Dendritic cell treated with granulocyte-macrophage colony-stimulating factor and Interleukin-4, amounts not matched to agents 40 ng/mL and 50 ng/mL, for 4 days (primary cell): ENCODE measurements at regions of chr9 and their contacts with region 1.

Region 1: DNA sequence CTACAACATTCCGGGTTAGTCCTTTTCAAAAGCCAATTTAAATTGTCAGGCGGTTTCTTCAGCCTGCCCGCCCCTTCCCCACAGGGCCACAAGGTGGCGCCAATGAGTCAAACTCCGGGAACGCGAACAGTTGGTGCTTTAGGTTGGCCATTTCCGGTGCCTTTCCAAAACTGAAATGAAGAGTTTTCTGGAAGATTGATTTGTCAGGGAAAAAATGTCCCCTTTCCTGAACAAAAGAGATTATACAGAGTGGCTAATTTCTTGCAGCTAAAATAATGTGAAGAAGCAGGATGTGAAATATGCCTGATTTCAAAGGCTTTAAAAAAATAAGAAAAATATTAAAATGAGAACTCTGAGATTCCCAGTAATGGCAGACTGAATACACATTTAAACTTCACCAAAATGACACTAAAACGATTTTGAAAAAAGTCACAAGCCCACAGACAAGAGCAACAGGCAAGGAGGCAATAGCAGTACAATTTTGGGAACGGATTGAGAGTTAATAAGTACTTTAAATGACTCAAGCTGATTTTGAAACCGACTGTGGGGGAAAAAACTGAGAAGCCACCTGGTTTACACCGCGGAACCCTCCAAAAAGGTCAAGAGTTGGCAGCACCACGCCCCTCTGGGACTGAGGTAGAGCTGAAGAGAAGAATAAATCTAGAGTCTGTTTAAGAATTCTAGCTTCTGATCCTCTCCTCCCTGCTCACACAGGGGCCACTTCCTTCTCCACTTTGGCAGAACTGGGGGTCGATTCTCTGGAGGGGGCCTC is 45.7 kb downstream of the SLC46A2 start:
- H3K4me3 Mint-ChIP-seq: no peak overlapping the region
- H3K27ac Mint-ChIP-seq: peak overlapping the region; percentile 73
- H3K4me1 Mint-ChIP-seq: peaks cover 81% of the 10 kb centered on the region
- H3K27me3 Mint-ChIP-seq: no peaks in the 10 kb centered on the region

Region 2: DNA sequence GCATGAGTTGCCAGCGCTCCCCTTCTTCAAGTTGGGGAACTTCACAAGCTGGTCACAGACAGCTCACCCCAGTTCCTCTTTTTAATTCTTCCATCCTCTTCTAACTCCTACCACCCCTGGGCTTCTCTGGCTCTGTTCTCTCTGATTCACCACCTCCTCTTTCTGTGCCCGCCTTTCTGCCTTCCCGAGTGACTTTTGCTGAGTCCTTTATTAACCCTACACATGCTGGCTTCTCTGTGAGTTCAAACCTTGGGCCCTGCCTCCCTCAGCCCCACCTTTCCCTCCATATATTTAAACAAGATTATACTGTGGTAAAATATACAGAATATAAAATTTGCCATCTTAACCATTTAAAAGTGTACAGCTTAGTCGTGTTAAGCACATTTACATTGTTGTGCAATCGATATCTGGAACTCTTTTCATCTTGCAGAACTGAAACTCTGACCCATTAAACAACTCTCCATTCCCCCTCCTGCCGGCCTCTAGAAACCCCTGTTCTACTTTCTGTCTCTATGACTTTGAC is 13.7 kb after region 1 on chr9:
- intact Hi-C with region 1: loop called (anchors 2 kb)
- H3K4me3 Mint-ChIP-seq: peak overlapping the region; percentile 46
- H3K27ac Mint-ChIP-seq: peak overlapping the region; percentile 89
- H3K4me1 Mint-ChIP-seq: peaks cover 97% of the 10 kb centered on the region
- H3K27me3 Mint-ChIP-seq: peaks cover 2% of the 10 kb centered on the region

Region 3: DNA sequence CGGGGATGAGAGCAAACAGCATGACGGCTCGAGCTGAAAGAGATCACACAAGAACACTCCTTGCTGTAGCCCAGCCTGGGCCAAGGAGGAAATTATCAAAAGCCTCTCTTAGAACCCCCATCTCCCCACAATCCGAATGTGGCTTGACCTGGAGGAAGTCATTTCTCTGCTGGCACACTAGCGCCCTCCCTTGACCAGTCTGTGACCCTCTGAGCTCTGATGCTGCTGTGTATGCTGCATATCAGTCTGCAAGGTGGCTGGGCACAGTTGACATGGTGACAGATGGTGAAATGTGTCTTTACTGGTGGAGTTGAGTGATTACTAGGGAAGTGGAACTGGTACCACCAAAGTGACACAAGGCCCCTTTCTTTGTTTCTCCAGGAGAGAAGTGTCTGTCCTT is 42.4 kb after region 1 on chr9:
- intact Hi-C with region 1: loop called (anchors 1 kb)
- H3K4me3 Mint-ChIP-seq: no peak overlapping the region
- H3K27ac Mint-ChIP-seq: peak overlapping the region; percentile 11
- H3K4me1 Mint-ChIP-seq: peaks cover 92% of the 10 kb centered on the region
- H3K27me3 Mint-ChIP-seq: peaks cover 8% of the 10 kb centered on the region

Region 4: GRCh38 chr9:112898872-112899311 is 53.9 kb after region 1 on chr9:
- intact Hi-C with region 1: loop called (anchors 1 kb)
- H3K4me3 Mint-ChIP-seq: no peak overlapping the region
- H3K27ac Mint-ChIP-seq: peak overlapping the region; percentile 77
- H3K4me1 Mint-ChIP-seq: peaks cover 56% of the 10 kb centered on the region
- H3K27me3 Mint-ChIP-seq: no peaks in the 10 kb centered on the region